ENCODE measurements at regions of chr20 and their contacts with region 1.

Region 1: GRCh38 chr20:11329271-11329670 is 588.4 kb upstream of the BTBD3 start:
- DNase-seq: no peak
- ATAC-seq: no peak
- H3K4me3 ChIP-seq: no peak overlapping the region
- H3K27ac ChIP-seq: no peak overlapping the region
- H3K4me1 ChIP-seq: no peaks in the 10 kb centered on the region
- H3K27me3 ChIP-seq: no peaks in the 10 kb centered on the region
- CTCF ChIP-seq: no peak
- EP300 ChIP-seq: no peak
- POLR2A ChIP-seq: no peak
- RAD21 ChIP-seq: no peak

Region 2: DNA sequence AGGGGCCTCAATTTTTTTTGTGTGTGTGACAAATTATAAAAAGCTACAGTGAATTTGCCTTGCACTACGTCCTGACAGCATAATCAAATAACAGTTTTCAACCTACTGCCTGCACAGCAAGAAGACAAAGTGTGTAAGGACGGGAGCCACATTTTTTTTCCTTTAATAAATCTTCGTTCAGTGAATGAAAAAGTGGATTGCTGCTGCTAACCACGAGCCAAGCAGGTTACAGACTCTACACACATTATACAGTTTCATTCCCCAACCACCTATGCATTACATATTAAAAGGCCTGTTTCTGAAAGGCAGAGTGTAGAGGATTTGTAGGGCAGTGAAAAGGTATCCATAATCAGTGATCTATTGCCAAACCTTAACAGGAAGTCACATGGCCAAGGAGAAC is 18.5 kb after region 1 on chr20:
- CTCF ChIA-PET with region 1: interaction called, 4 read pairs
- POLR2A ChIA-PET with region 1: no interaction called
- RAD21 ChIA-PET with region 1: interaction called, 4 read pairs
- SMC1A ChIA-PET with region 1: interaction called, 17 read pairs
- in situ Hi-C with region 1: no loop called
- intact Hi-C with region 1: no loop called
- DNase-seq: no peak
- ATAC-seq: peak; percentile 67
- H3K4me3 ChIP-seq: no peak overlapping the region
- H3K27ac ChIP-seq: no peak overlapping the region
- H3K4me1 ChIP-seq: no peaks in the 10 kb centered on the region
- H3K27me3 ChIP-seq: no peaks in the 10 kb centered on the region
- CTCF ChIP-seq: no peak
- EP300 ChIP-seq: no peak
- POLR2A ChIP-seq: no peak
- RAD21 ChIP-seq: no peak